Posterior cingulate gyrus (tissue), 11 donors: ENCODE measurements at regions of chr7 and their contacts with region 1.

Region 1: GRCh38 chr7:8295638-8296361 is 33.8 kb upstream of the ICA1 start:
- DNase-seq: peak in 1 of 10 donors; percentile 16

Region 2: GRCh38 chr7:7672545-7673239 is 623.1 kb before region 1 on chr7:
- intact Hi-C with region 1: loop called (anchors 10 kb)
- DNase-seq: no peak

Region 3: GRCh38 chr7:8190119-8190895 is 105.5 kb before region 1 on chr7:
- intact Hi-C with region 1: no loop called
- DNase-seq: peak in 4 of 10 donors; percentile 39 to 64 (median 50)